ENCODE measurements at regions of chr20 and their contacts with region 1.

Region 1: GRCh38 chr20:44747166-44748004 is 1.7 kb downstream of the KCNK15 start:
- DNase-seq: peak; percentile 83
- ATAC-seq: peak; percentile 83
- H3K4me3 ChIP-seq: no peak overlapping the region
- H3K27ac ChIP-seq: no peak overlapping the region
- H3K4me1 ChIP-seq: peaks cover 20% of the 10 kb centered on the region
- H3K27me3 ChIP-seq: peaks cover 18% of the 10 kb centered on the region
- CTCF ChIP-seq: peak; percentile 70

Region 2: GRCh38 chr20:44866703-44867335 is 119.4 kb after region 1 on chr20:
- intact Hi-C with region 1: loop called (anchors 5 kb)
- DNase-seq: no peak
- ATAC-seq: no peak
- H3K4me3 ChIP-seq: no peak overlapping the region
- H3K27ac ChIP-seq: no peak overlapping the region
- H3K4me1 ChIP-seq: no peaks in the 10 kb centered on the region
- H3K27me3 ChIP-seq: no peaks in the 10 kb centered on the region
- CTCF ChIP-seq: no peak